Esophagus muscularis mucosa (tissue), 4 donors: ENCODE measurements at regions of chrX and their contacts with region 1.

Region 1: GRCh38 chrX:136154998-136155397 is 7.7 kb downstream of the FHL1 start:
- DNase-seq: no peak
- H3K4me3 ChIP-seq: peak overlapping the region; percentile 6 to 39 (median 20)
- H3K27ac ChIP-seq: peak overlapping the region; percentile 94 to 99 (median 98)
- H3K4me1 ChIP-seq: peaks cover 17 to 64% (median 38%) of the 10 kb centered on the region in 4 donors
- H3K27me3 ChIP-seq: peaks cover 0 to 6% (median 0%) of the 10 kb centered on the region in 4 donors
- CTCF ChIP-seq: no peak
- EP300 ChIP-seq: no peak
- POLR2A ChIP-seq: no peak

Region 2: DNA sequence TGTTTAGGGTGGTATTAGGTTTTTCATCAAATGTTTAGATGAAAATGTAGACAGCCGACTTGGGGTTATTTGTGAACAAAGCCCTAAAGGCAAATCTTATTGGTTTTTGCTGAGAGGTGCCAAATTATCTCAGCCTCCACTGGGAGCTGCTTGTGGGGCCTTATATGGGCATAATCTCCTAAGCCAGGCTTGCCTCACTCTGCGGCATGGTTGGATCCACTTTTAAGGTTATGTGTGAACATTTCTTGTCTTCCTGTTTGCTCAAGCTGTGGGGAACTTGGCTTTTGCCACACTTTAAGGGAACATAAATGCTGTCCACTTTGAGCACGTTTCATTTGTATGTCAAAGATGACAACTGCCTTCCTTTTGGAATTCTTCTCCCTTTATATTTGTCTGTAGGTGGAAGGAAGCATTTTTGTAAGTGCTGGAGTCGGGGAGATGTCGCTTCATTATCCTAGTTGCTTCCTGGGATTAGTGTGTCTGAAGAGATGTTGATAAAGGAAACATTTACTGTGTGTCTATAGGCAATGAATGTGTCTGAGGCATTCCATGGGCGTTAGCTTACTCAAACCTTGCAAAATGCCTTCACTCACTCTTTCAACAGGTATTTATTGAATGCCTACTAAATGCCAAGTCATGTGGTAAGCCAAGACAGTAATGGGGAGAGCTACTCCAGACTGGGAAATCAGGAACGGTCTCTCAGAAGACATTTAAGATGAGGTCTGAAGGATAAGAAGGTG is 91.5 kb before region 1 on chrX:
- intact Hi-C with region 1: loop called (anchors 5 kb)
- DNase-seq: no peak
- H3K4me3 ChIP-seq: no peak overlapping the region
- H3K27ac ChIP-seq: peak overlapping the region; percentile 81 to 90 (median 85)
- H3K4me1 ChIP-seq: peaks cover 0 to 66% (median 50%) of the 10 kb centered on the region in 4 donors
- H3K27me3 ChIP-seq: no peaks in the 10 kb centered on the region
- CTCF ChIP-seq: no peak
- EP300 ChIP-seq: no peak
- POLR2A ChIP-seq: no peak